K562 (cell line): ENCODE measurements at regions of chr7 and their contacts with region 1.

Region 1: GRCh38 chr7:135160098-135160857 is 10.2 kb downstream of the CYREN start:
- DNase-seq: peak; percentile 44 to 90 (median 60)
- ATAC-seq: peak; percentile 76
- H3K4me3 ChIP-seq: no peak overlapping the region
- H3K27ac ChIP-seq: peak overlapping the region; percentile 77
- H3K4me1 ChIP-seq: peaks cover 8 to 27% of the 10 kb centered on the region in 2 experiments
- H3K27me3 ChIP-seq: no peaks in the 10 kb centered on the region
- CTCF ChIP-seq: no peak
- EP300 ChIP-seq: peak; percentile 93
- POLR2A ChIP-seq: no peak
- RAD21 ChIP-seq: no peak

Region 2: DNA sequence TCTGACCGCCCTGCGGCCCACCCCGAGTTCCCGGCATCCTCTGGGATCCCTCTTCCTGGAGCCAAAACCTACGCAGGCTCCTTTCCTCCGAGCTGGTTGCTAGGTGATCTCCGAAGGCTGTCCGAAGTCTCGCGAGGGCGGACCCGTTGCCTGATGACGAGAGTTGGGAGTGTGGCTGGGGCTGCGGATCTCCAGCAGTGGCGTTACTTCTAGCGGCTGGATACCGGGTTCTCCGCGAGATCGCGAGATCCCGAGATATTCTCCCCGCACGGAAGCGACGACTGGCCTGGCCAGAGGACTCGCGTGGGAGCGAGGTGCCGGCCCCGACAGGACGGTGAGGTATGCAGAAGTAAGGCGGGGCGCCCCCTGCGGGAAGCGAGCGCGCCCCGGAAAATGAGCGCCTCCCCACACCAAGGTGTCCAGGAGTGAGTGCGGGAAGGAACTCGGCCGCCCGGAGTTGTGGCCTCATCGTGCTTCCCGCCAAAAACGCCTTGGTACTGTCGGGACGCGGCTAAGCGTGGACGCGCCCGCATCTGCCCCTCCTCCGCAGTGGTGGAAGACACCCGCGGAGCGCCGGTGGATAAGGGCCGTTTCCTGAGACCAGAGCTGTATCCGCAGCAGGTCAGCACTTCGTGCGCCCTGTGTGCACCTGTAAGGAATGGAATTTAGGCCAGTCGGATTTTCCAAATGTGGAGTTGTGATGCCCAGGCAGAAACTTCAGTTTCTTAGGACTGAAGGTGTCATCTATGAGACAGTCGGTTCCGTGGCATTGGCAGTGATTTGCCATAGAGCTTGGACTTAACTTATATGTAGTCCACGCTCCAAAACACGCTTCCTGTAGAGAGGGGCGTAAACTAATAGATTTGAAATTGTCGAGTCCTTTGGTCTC is 173.7 kb before region 1 on chr7 and contains the start of gene AGBL3:
- CTCF ChIA-PET with region 1: no interaction called
- POLR2A ChIA-PET with region 1: no interaction called
- in situ Hi-C with region 1: no loop called
- intact Hi-C with region 1: loop called (anchors 2 kb)
- DNase-seq: peak; percentile 94 to 98 (median 96)
- ATAC-seq: peak; percentile 98
- H3K4me3 ChIP-seq: peak within 1 kb of the TSS; percentile 69
- H3K27ac ChIP-seq: peak within 1 kb of the TSS; percentile 78
- H3K4me1 ChIP-seq: peaks cover 9 to 10% of the 10 kb centered on the region in 2 experiments; a peak in 4 of 5 replicates
- H3K27me3 ChIP-seq: no peaks in the 10 kb centered on the region
- CTCF ChIP-seq: peak; percentile 81 to 91 (median 90)
- EP300 ChIP-seq: no peak; the same call in 1 of the 2 replicates
- POLR2A ChIP-seq: peak; percentile 93
- RAD21 ChIP-seq: peak; percentile 53 to 60
- polyA plus RNA-seq, gene AGBL3: 0.71 to 0.75 TPM

Region 3: DNA sequence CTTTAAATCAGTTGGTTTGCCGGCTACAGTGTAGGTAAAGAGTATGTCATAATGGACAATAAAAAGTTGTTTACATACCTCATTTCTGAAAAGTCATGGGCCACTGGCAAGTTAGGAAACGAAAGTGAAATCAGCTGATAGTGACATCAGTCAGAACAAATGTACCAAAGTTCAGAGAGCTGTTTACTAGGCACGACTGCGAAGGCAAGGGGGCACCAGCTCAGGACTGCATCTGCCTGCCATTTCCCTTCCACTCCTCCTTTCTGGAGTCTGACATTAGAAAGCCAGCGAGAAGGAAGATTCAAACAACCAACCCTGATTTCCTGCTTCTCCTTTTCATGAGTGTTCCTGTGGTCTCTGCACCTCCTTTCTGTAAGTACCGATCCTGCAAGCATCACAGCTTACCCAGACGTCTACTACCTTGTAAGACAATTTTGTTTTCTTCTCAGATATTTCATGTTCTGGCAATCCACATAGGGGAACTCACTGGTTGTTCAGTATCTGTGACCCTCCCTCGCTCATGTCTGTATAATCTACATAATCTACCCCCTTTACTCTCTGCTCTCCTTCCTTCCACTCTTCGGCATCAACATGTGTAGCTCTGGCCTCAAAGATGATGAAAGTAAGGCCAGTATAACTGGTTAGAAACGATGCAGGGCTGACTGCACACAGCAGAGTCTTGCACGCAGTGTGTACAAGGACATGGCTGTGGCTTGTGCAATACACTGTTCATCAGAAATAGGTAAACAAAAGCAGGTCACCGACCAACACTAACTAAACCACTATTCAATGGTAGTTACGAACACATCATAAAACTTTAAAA is 12.2 kb before region 1 on chr7 and contains the start of gene TMEM140:
- CTCF ChIA-PET with region 1: no interaction called
- POLR2A ChIA-PET with region 1: interaction called, 11 read pairs
- in situ Hi-C with region 1: no loop called
- intact Hi-C with region 1: no loop called
- DNase-seq: peak in 2 of 4 experiments; percentile 23 to 46
- ATAC-seq: peak; percentile 78
- H3K4me3 ChIP-seq: peak within 1 kb of the TSS; percentile 4
- H3K27ac ChIP-seq: peak within 1 kb of the TSS; percentile 58; the same call in 2 of the 3 replicates
- H3K4me1 ChIP-seq: peaks cover 0 to 11% of the 10 kb centered on the region in 2 experiments; a peak in 3 of 5 replicates
- H3K27me3 ChIP-seq: no peaks in the 10 kb centered on the region
- CTCF ChIP-seq: no peak
- EP300 ChIP-seq: no peak
- POLR2A ChIP-seq: no peak
- RAD21 ChIP-seq: peak in 1 of 2 experiments; percentile 11; a peak in 1 of 4 replicates
- polyA plus RNA-seq, gene TMEM140: 0.35 to 0.82 TPM

Region 4: DNA sequence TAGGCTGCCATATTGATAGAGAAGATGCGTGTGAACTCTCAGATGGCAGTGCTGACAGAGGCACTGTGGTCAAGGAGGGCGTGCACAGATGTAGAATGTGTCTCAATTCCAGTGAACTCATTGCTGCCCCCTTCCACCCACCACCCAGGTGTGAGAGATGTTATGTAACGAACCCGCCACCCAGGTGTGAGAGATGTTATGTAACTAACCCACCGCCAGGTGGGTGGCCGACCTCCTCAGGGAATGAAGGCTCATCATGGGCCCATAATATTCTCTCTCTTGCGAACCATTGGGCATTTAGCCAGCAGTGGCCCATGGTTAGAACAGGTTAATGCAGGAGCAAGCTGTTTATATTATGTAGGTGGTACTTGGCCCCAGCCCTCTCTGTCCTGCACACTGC is 957.3 kb after region 1 on chr7:
- CTCF ChIA-PET with region 1: no interaction called
- POLR2A ChIA-PET with region 1: no interaction called
- in situ Hi-C with region 1: no loop called
- intact Hi-C with region 1: no loop called
- DNase-seq: no peak
- ATAC-seq: no peak
- H3K4me3 ChIP-seq: no peak overlapping the region
- H3K27ac ChIP-seq: no peak overlapping the region
- H3K4me1 ChIP-seq: peaks cover 0 to 25% of the 10 kb centered on the region in 2 experiments; a peak in 3 of 5 replicates
- H3K27me3 ChIP-seq: no peaks in the 10 kb centered on the region
- CTCF ChIP-seq: no peak
- EP300 ChIP-seq: no peak
- POLR2A ChIP-seq: no peak
- RAD21 ChIP-seq: no peak